Prostate gland (tissue), 2 donors: ENCODE measurements at regions of chr6 and their contacts with region 1.

Region 1: GRCh38 chr6:133854364-133855275 is 34.3 kb upstream of the TCF21 start:
- DNase-seq: no peak
- H3K4me3 ChIP-seq: no peak overlapping the region
- H3K27ac ChIP-seq: no peak overlapping the region
- H3K4me1 ChIP-seq: no peaks in the 10 kb centered on the region
- H3K27me3 ChIP-seq: peaks cover 20% of the 10 kb centered on the region
- CTCF ChIP-seq: no peak
- POLR2A ChIP-seq: no peak

Region 2: GRCh38 chr6:132614554-132614953 is 1240.1 kb before region 1 on chr6:
- intact Hi-C with region 1: no loop called
- DNase-seq: no peak
- H3K4me3 ChIP-seq: no peak overlapping the region
- H3K27ac ChIP-seq: no peak overlapping the region
- H3K4me1 ChIP-seq: no peaks in the 10 kb centered on the region
- H3K27me3 ChIP-seq: no peaks in the 10 kb centered on the region
- CTCF ChIP-seq: no peak
- POLR2A ChIP-seq: no peak

Region 3: DNA sequence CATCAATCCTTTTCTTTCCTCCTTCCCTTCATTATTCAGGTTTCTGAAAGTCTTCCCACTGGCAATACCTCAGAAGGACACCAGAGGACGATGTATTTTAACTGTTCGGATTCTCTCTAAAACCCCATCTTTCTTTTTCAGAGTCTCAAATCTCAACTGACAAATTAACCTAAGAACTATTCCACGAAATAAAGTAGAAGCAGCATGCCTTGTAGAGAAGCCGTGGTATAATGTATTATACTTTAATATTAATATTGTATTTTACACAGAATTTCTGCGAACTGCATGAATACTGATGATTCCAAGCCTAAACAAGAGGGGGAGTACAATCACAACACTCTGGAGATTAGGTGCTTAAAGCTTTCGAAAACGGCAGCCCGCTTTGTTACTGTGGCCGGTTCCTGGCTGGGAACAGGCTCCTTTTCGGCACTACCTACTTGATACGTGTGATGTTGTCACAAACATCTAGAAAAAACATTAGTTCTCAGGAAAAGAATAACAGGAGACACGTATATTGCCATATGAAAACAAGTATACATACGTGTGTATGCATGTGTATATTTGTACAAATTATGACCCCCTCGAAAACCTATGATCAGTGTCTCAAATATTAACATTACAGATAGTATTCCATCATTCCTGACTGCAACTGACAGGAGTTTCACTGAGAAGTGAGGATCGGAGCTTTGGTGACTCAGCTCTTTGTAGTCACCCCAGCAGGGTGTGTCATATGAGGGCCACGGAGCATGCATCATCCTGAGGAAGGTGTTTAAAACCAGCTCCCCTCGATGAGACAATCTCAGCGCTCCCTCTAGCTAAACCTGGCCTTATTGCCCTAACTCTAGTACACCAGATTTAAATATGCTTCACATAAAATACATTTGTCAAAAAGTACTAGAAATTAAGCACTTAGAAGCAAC is 285.4 kb before region 1 on chr6:
- intact Hi-C with region 1: loop called (anchors 5 kb)
- DNase-seq: no peak
- H3K4me3 ChIP-seq: peak overlapping the region in 1 of 2 donors; percentile 7
- H3K27ac ChIP-seq: no peak overlapping the region
- H3K4me1 ChIP-seq: no peaks in the 10 kb centered on the region
- H3K27me3 ChIP-seq: no peaks in the 10 kb centered on the region
- CTCF ChIP-seq: peak; percentile 55 to 94 (median 84)
- POLR2A ChIP-seq: no peak

Region 4: DNA sequence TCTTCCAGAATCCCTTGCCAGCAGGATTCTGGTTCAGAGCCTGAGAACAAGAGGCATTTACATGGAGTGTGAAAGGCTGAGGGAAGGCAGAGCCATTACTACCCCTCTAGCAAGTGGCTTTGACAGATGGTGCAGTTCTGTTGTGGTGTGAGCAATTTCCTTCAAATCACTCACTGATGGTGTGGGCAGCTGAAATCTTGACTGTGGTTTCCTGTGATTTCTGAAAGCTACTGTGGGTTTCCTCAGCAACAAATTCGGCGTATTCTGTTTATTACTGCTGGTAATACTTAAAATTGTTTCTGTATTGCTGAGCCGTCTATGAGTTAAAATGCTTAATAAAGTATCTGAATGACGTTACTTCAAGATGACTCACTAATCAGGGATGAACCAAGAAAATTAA is 147.2 kb before region 1 on chr6:
- intact Hi-C with region 1: no loop called
- DNase-seq: no peak
- H3K4me3 ChIP-seq: no peak overlapping the region
- H3K27ac ChIP-seq: no peak overlapping the region
- H3K4me1 ChIP-seq: no peaks in the 10 kb centered on the region
- H3K27me3 ChIP-seq: no peaks in the 10 kb centered on the region
- CTCF ChIP-seq: no peak
- POLR2A ChIP-seq: no peak

Region 5: DNA sequence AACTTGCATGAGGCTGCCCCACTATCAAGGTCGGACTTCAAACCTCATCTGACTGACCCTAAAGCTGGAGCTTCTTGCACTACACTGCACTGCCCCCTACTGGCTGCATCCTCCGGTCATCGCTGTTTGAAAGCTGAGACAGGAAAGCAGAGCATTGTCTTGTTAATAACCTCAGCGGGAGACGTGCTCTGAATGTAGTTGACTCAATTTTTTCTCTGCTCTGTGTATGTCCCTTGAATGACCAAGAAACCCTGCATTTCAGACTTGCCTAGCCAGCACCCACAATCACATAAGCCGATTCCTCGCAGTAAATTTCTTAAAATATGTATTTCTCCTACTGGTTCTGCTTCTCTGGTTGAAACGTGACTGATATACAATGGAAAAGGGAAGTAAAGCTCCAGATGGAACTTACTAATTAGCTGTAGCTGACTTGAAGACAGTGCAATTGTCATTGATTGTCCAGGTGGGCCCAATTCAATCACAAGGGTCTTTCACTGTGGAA is 62.1 kb after region 1 on chr6:
- intact Hi-C with region 1: loop called (anchors 5 kb)
- DNase-seq: peak; percentile 80
- H3K4me3 ChIP-seq: no peak overlapping the region
- H3K27ac ChIP-seq: no peak overlapping the region
- H3K4me1 ChIP-seq: no peaks in the 10 kb centered on the region
- H3K27me3 ChIP-seq: no peaks in the 10 kb centered on the region
- CTCF ChIP-seq: peak; percentile 26 to 79 (median 72)
- POLR2A ChIP-seq: no peak

Region 6: DNA sequence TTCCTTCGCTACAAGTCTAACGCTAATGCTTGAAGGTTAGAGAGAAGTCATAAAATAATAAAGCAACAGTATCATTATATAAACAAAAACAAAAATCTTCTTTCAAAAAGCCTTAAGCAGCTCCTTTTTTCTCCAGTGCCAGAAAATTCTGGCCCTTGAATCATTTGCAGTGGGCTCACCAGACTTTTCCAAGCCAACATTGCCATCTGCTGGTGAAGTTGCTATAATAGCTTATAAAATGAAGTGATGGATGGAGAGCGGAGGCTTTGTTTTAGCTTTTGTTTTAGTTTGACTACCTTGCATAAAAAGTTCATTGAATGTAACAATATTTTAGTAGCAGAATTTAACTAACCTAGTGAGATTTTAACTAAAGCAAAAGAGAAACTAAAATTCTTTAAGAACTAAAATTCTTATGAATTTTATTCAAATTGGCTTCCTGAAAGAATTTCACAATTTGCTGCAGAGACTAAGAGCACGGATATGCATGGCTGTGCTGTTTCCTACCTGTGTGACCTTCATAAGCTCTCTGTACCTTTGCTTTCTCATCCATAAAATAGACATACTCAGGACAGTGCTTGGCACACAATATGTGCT is 242.6 kb after region 1 on chr6:
- intact Hi-C with region 1: loop called (anchors 10 kb)
- DNase-seq: peak; percentile 51
- H3K4me3 ChIP-seq: no peak overlapping the region
- H3K27ac ChIP-seq: no peak overlapping the region
- H3K4me1 ChIP-seq: no peaks in the 10 kb centered on the region
- H3K27me3 ChIP-seq: no peaks in the 10 kb centered on the region
- CTCF ChIP-seq: peak; percentile 51 to 81 (median 74)
- POLR2A ChIP-seq: no peak